HEK293T (cell line): ENCODE measurements at regions of chr1 and their contacts with region 1.

Region 1: DNA sequence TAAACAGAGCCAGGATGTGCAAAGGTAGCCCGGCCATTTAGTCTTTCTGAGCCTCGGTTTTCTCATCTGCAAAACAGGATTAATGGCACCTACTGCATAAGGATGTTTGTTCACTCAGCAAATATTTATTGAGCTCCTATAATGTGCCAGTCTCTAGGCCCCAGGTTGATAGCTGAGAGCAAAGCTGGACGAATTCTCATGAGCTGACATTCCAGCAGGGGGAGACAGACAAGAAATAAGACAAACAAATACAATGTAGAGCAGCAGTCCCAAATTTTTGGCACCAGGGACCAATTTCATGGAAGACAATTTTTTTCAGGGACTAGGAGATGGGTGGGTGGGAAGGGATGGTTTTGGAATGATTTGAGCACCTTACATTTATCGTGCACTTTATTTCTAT is 74.3 kb upstream of the PAX7 start:
- DNase-seq: peak; percentile 34

Region 2: GRCh38 chr1:18575620-18576019 is 19.3 kb after region 1 on chr1:
- CTCF ChIA-PET with region 1: interaction called, 15 read pairs
- POLR2A ChIA-PET with region 1: no interaction called
- DNase-seq: peak; percentile 69

Region 3: GRCh38 chr1:18581420-18581880 is 25.1 kb after region 1 on chr1:
- CTCF ChIA-PET with region 1: interaction called, 15 read pairs
- POLR2A ChIA-PET with region 1: no interaction called
- DNase-seq: peak; percentile 78